ENCODE measurements at regions of chr20 and their contacts with region 1.

Region 1: GRCh38 chr20:45044084-45044573 is 56.8 kb downstream of the KCNS1 start:
- DNase-seq: peak; percentile 39 to 75
- ATAC-seq: peak; percentile 82 to 87
- H3K4me3 ChIP-seq: no peak overlapping the region
- H3K27ac ChIP-seq: no peak overlapping the region
- H3K4me1 ChIP-seq: peaks cover 24% of the 10 kb centered on the region
- CTCF ChIP-seq: peak; percentile 87
- EP300 ChIP-seq: no peak
- POLR2A ChIP-seq: no peak
- RAD21 ChIP-seq: peak; percentile 82 to 86

Region 2: DNA sequence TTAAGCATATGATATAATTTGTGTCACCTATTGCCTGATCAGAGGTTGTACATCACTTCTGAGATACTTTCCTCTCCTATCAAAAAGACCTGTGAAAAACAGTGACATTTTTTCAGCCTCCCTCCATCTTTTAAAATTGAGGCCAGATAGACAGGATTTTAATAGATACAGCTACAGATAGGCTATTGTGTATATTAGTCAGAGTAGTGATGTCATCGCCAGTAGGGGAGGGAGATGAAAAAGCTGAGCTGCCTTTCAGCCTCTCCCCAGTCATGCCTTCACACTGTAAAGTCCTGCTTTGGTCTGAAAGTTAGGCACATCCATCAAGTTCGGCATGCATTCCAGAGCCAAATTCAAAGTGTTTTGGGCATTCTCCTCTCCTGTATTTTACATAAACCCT is 142.2 kb before region 1 on chr20:
- CTCF ChIA-PET with region 1: no interaction called
- POLR2A ChIA-PET with region 1: no interaction called
- DNase-seq: no peak
- ATAC-seq: peak in 1 of 2 experiments; percentile 69; a peak in 4 of 6 replicates
- H3K4me3 ChIP-seq: no peak overlapping the region
- H3K27ac ChIP-seq: no peak overlapping the region
- H3K4me1 ChIP-seq: peaks cover 3% of the 10 kb centered on the region; the same call in 1 of the 3 replicates
- CTCF ChIP-seq: no peak
- EP300 ChIP-seq: no peak
- POLR2A ChIP-seq: no peak
- RAD21 ChIP-seq: no peak

Region 3: GRCh38 chr20:45020236-45020886 is 23.8 kb before region 1 on chr20:
- CTCF ChIA-PET with region 1: interaction called, 14 read pairs
- POLR2A ChIA-PET with region 1: no interaction called
- DNase-seq: no peak
- ATAC-seq: no peak
- H3K4me3 ChIP-seq: no peak overlapping the region
- H3K27ac ChIP-seq: no peak overlapping the region
- H3K4me1 ChIP-seq: no peaks in the 10 kb centered on the region
- CTCF ChIP-seq: no peak
- EP300 ChIP-seq: no peak
- POLR2A ChIP-seq: no peak
- RAD21 ChIP-seq: no peak

Region 4: GRCh38 chr20:45077559-45077958 is 33.4 kb after region 1 on chr20:
- CTCF ChIA-PET with region 1: interaction called, 21 read pairs
- POLR2A ChIA-PET with region 1: no interaction called
- DNase-seq: no peak
- ATAC-seq: no peak
- H3K4me3 ChIP-seq: no peak overlapping the region
- H3K27ac ChIP-seq: no peak overlapping the region
- H3K4me1 ChIP-seq: no peaks in the 10 kb centered on the region
- CTCF ChIP-seq: no peak
- EP300 ChIP-seq: no peak
- POLR2A ChIP-seq: no peak
- RAD21 ChIP-seq: no peak

Region 5: GRCh38 chr20:45111799-45112471 is 67.8 kb after region 1 on chr20:
- CTCF ChIA-PET with region 1: interaction called, 45 read pairs
- POLR2A ChIA-PET with region 1: no interaction called
- DNase-seq: peak in 1 of 2 experiments; percentile 20
- ATAC-seq: peak in 1 of 2 experiments; percentile 59; a peak in 3 of 6 replicates
- H3K4me3 ChIP-seq: no peak overlapping the region
- H3K27ac ChIP-seq: no peak overlapping the region
- H3K4me1 ChIP-seq: no peaks in the 10 kb centered on the region
- CTCF ChIP-seq: peak; percentile 60
- EP300 ChIP-seq: no peak
- POLR2A ChIP-seq: no peak
- RAD21 ChIP-seq: peak; percentile 44 to 45; a peak in 4 of 5 replicates

Region 6: DNA sequence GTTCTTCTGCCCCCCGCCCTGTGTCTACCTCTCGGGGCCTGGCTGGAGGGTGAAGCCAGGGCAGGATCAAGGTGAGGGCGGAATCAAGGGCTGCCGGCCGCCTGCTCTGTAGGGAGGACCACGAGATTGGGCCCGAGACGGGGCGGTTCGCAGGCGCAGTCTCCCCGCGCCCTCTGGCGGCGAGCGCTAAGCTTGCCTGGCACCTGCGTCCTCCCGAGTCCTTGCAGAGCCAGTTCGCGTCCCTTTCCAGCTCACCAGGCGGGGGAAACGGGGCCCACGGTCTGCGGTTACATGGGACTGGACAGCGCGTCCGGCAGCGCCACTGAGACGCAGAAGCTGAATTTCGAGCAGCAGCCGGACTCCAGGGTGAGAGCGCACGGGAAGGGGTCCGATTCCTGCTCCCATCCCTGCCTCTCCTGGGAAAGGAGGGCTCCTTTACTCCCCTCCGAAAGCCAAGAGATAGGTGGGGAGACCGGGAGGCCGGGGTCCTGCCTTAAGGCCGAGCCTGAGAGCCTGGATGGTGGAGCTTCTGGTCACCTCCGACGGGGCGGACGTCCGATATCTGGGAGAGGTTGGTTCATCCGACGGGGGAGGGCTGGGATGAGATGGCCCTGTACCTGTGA is 267.6 kb after region 1 on chr20:
- CTCF ChIA-PET with region 1: interaction called, 27 read pairs
- POLR2A ChIA-PET with region 1: interaction called, 3 read pairs
- DNase-seq: peak; percentile 75 to 78
- ATAC-seq: peak; percentile 79 to 94
- H3K4me3 ChIP-seq: no peak overlapping the region; the same call in 2 of the 3 replicates
- H3K27ac ChIP-seq: peak overlapping the region in 1 of 2 experiments; percentile 41; a peak in 1 of 6 replicates
- H3K4me1 ChIP-seq: no peaks in the 10 kb centered on the region
- CTCF ChIP-seq: peak; percentile 77
- EP300 ChIP-seq: no peak
- POLR2A ChIP-seq: no peak
- RAD21 ChIP-seq: peak; percentile 60 to 68

Region 7: GRCh38 chr20:45392733-45393132 is 348.6 kb after region 1 on chr20:
- CTCF ChIA-PET with region 1: no interaction called
- POLR2A ChIA-PET with region 1: no interaction called
- DNase-seq: no peak
- ATAC-seq: no peak; a peak in 1 of 6 replicates
- H3K4me3 ChIP-seq: no peak overlapping the region
- H3K27ac ChIP-seq: no peak overlapping the region
- H3K4me1 ChIP-seq: no peaks in the 10 kb centered on the region
- CTCF ChIP-seq: peak; percentile 21; the same call in 1 of the 3 replicates
- EP300 ChIP-seq: no peak
- POLR2A ChIP-seq: no peak
- RAD21 ChIP-seq: 0 out of 5 replicates have a peak, but pooled peaks have one; percentile 13 to 20